K562 (cell line): ENCODE measurements at regions of chr5 and their contacts with region 1.

Region 1: DNA sequence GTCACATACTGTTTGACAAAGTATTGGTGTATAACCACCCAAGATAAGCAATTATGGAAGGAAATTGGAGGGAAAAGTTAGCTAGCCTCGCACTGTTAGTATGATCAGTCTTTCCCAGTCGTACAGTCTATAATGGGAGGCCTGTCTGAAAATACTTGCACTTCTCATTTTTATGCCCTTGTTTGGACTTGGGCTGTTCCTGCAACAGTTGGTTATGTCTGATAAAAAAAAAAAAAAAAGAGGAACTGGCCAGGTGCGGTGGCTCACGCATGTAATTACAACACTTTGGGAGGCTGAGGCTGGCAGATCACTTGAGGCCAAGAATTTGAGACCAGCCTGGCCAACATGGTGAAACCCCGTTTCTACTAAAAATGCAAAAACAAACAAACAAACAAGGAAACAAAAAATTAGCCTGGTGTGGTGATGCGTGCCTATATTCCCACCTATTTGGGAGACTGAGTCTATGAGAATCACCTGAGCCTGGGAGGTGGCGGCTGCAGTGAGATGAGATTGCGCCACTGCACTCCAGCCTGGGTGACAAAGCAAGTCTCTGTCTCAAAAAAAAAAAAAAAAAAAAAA is 58.3 kb upstream of the ANKRD33B start:
- DNase-seq: peak in 2 of 4 experiments; percentile 39 to 66
- ATAC-seq: peak; percentile 29
- H3K4me3 ChIP-seq: no peak overlapping the region
- H3K27ac ChIP-seq: peak overlapping the region; percentile 6; the same call in 1 of the 3 replicates
- H3K4me1 ChIP-seq: peaks cover 26 to 67% of the 10 kb centered on the region in 2 experiments
- H3K27me3 ChIP-seq: peaks cover 0 to 13% of the 10 kb centered on the region in 2 experiments; a peak in 3 of 5 replicates
- CTCF ChIP-seq: 0 out of 6 replicates have a peak, but pooled peaks of 1 of the 3 experiments have one; percentile 5
- EP300 ChIP-seq: peak; percentile 83
- POLR2A ChIP-seq: no peak
- RAD21 ChIP-seq: no peak

Region 2: GRCh38 chr5:10489810-10490426 is 15.7 kb before region 1 on chr5:
- CTCF ChIA-PET with region 1: no interaction called
- POLR2A ChIA-PET with region 1: interaction called, 16 read pairs
- in situ Hi-C with region 1: no loop called
- intact Hi-C with region 1: no loop called
- DNase-seq: no peak
- ATAC-seq: no peak
- H3K4me3 ChIP-seq: no peak overlapping the region
- H3K27ac ChIP-seq: no peak overlapping the region
- H3K4me1 ChIP-seq: peaks cover 7 to 16% of the 10 kb centered on the region in 2 experiments
- H3K27me3 ChIP-seq: peaks cover 35 to 48% of the 10 kb centered on the region in 2 experiments
- CTCF ChIP-seq: no peak
- EP300 ChIP-seq: no peak
- POLR2A ChIP-seq: no peak
- RAD21 ChIP-seq: no peak

Region 3: GRCh38 chr5:10588779-10589447 is 83.3 kb after region 1 on chr5:
- CTCF ChIA-PET with region 1: no interaction called
- POLR2A ChIA-PET with region 1: interaction called, 3 read pairs
- in situ Hi-C with region 1: no loop called
- intact Hi-C with region 1: loop called (anchors 2 kb)
- DNase-seq: peak; percentile 98 to 99 (median 98)
- ATAC-seq: peak; percentile 92
- H3K4me3 ChIP-seq: no peak overlapping the region; the same call in 1 of the 2 replicates
- H3K27ac ChIP-seq: peak overlapping the region; percentile 72
- H3K4me1 ChIP-seq: peaks cover 33 to 35% of the 10 kb centered on the region in 2 experiments
- H3K27me3 ChIP-seq: no peaks in the 10 kb centered on the region
- CTCF ChIP-seq: peak in 2 of 3 experiments; percentile 7 to 13; a peak in 1 of 6 replicates
- EP300 ChIP-seq: peak; percentile 98
- POLR2A ChIP-seq: no peak
- RAD21 ChIP-seq: peak; percentile 5 to 40; a peak in 3 of 4 replicates

Region 4: GRCh38 chr5:10607666-10608073 is 102.1 kb after region 1 on chr5:
- CTCF ChIA-PET with region 1: no interaction called
- POLR2A ChIA-PET with region 1: no interaction called
- in situ Hi-C with region 1: no loop called
- intact Hi-C with region 1: loop called (anchors 5 kb)
- DNase-seq: peak; percentile 41 to 82 (median 54)
- ATAC-seq: peak; percentile 92
- H3K4me3 ChIP-seq: no peak overlapping the region
- H3K27ac ChIP-seq: peak overlapping the region; percentile 24
- H3K4me1 ChIP-seq: peaks cover 29% of the 10 kb centered on the region in 2 experiments
- H3K27me3 ChIP-seq: no peaks in the 10 kb centered on the region
- CTCF ChIP-seq: peak; percentile 49 to 56 (median 54)
- EP300 ChIP-seq: peak; percentile 16; the same call in 1 of the 2 replicates
- POLR2A ChIP-seq: no peak
- RAD21 ChIP-seq: peak; percentile 58 to 68

Region 5: DNA sequence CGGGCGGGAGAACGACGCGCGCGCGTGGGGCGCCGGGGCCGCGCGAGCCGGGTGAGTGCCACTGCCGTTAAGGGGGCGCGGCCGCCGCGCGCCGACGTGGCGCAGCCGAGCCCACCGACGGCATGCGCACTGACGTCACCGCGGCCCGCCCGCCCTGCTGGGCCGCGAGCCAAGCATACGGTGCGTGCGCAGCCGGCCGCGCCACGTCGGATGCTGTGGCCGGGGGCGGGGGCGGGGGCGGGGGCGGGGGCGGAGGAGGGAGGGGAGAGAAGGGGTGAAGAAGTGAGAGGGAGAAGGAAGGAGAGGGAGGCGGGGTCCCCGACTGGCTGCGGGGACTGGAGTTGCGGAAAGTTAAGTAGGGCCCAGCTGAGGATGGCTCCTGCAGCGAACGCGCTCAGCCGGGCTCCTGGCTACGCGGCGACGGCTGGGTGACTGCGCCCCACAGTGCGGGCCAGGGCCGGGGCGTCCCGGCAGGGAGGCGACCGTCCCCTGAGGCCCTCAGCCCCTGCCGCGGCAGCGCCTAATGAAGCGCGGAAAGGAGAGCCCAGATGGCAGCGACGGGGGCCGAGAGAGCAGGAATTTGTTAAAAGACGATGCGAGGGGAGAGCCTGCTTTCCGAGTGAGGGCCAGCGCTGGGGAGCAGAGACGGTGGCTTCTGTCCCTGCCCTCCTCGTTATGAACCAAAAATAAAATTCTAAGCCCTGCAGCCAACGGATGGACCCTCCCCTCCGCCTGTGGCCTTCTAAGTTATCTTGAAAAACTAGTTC is 255.7 kb after region 1 on chr5 and contains the start of gene DAP:
- CTCF ChIA-PET with region 1: no interaction called
- POLR2A ChIA-PET with region 1: no interaction called
- in situ Hi-C with region 1: no loop called
- intact Hi-C with region 1: loop called (anchors 10 kb)
- DNase-seq: peak; percentile 94 to 95 (median 94)
- ATAC-seq: peak; percentile 75
- H3K4me3 ChIP-seq: peak within 1 kb of the TSS; percentile 88
- H3K27ac ChIP-seq: peak within 1 kb of the TSS; percentile 95
- H3K4me1 ChIP-seq: peaks cover 18 to 36% of the 10 kb centered on the region in 2 experiments
- H3K27me3 ChIP-seq: no peaks in the 10 kb centered on the region
- CTCF ChIP-seq: no peak
- EP300 ChIP-seq: no peak
- POLR2A ChIP-seq: peak; percentile 75
- RAD21 ChIP-seq: 0 out of 4 replicates have a peak, but pooled peaks of 1 of the 2 experiments have one; percentile 7
- polyA plus RNA-seq, gene DAP: 14.1 to 21.7 TPM